ENCODE measurements at regions of chr14 and their contacts with region 1.

Region 1: GRCh38 chr14:93132470-93133065 is 16.8 kb upstream of the ITPK1 start:
- DNase-seq: peak; percentile 37
- H3K4me3 ChIP-seq: no peak overlapping the region
- H3K27ac ChIP-seq: no peak overlapping the region
- H3K4me1 ChIP-seq: peaks cover 5% of the 10 kb centered on the region
- H3K27me3 ChIP-seq: no peaks in the 10 kb centered on the region

Region 2: GRCh38 chr14:92951912-92952471 is 180.6 kb before region 1 on chr14:
- in situ Hi-C with region 1: loop called (anchors 10 kb)
- DNase-seq: peak; percentile 74
- H3K4me3 ChIP-seq: no peak overlapping the region
- H3K27ac ChIP-seq: no peak overlapping the region
- H3K4me1 ChIP-seq: no peaks in the 10 kb centered on the region
- H3K27me3 ChIP-seq: no peaks in the 10 kb centered on the region

Measured in GM23248 (cell line).